Activated CD4-positive, alpha-beta memory T cell treated with anti-CD3 and anti-CD28 coated beads, Interleukin-2, amount 10 ng/mL, durations not matched to agents 7 days and 5 days (primary cell): ENCODE measurements at regions of chr3 and their contacts with region 1.

Region 1: GRCh38 chr3:119322835-119323722 is 28.9 kb downstream of the ARHGAP31 start:
- DNase-seq: peak; percentile 93
- H3K4me3 Mint-ChIP-seq: peak overlapping the region; percentile 68
- H3K27ac Mint-ChIP-seq: peak overlapping the region; percentile 69
- H3K4me1 Mint-ChIP-seq: peaks cover 19% of the 10 kb centered on the region
- H3K27me3 Mint-ChIP-seq: peaks cover 25% of the 10 kb centered on the region

Region 2: GRCh38 chr3:119293871-119294695 is 29.0 kb before region 1 on chr3 and contains the start of gene ARHGAP31:
- CTCF ChIA-PET with region 1: interaction called, 3 read pairs
- POLR2A ChIA-PET with region 1: interaction called, 60 read pairs
- DNase-seq: peak; percentile 84
- H3K4me3 Mint-ChIP-seq: peak within 1 kb of the TSS; percentile 80
- H3K27ac Mint-ChIP-seq: peak within 1 kb of the TSS; percentile 76
- H3K4me1 Mint-ChIP-seq: peaks cover 47% of the 10 kb centered on the region
- H3K27me3 Mint-ChIP-seq: peaks cover 28% of the 10 kb centered on the region
- total RNA-seq, gene ARHGAP31: 3.7 to 4.5 TPM

Region 3: GRCh38 chr3:119588112-119588511 is 265.0 kb after region 1 on chr3:
- CTCF ChIA-PET with region 1: no interaction called
- POLR2A ChIA-PET with region 1: no interaction called
- DNase-seq: no peak
- H3K4me3 Mint-ChIP-seq: no peak overlapping the region
- H3K27ac Mint-ChIP-seq: no peak overlapping the region
- H3K4me1 Mint-ChIP-seq: peaks cover 26% of the 10 kb centered on the region
- H3K27me3 Mint-ChIP-seq: peaks cover 6% of the 10 kb centered on the region